Gastrocnemius medialis (tissue), 4 donors: ENCODE measurements at regions of chr1 and their contacts with region 1.

Region 1: DNA sequence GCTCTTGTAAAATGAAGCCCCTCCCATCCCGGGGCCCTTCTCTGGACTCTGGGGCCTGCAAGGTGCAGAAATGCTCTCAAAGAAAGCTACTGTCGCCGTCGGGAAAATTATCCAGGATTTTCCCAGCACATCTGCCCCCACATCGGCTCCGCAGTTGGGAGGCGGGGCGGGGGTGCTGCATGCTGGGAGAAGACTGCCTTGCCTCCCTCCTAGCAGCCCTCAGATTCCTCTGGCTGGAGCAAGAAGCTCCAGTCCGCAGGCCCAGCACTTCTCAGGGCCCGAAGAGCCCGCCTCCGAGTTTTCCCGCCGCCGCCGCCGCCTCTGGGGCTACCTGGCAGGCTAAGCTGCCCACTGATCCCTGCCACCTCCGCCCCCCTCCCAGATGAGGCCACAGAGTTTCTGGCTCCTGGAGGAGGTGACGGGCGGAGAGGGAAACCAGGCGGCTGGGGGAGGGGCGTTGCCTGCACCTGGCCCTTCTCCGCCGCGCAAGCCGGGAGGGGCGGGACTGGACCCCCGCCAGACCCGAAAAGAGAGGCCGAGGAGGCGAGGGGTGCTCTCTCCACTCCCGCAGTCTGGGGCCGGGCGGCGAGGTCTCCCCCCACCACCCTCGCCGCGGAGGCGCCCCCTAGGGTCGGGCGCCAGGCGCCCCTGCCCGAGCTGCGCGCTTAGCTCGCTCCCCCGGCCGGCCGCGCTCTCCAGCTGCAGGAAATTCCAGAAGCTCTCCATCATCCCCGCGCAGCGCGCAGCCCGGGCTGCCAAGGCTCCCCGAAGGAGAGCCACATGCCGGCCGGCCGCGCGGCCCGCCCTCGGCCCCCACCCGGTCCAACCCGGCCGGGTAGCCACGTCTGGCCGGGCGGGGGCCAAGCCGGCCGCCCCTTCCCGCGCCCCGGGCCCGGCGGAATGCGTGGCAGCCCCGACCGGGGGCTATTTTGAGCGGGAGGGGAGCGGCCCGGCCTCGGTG is 28.8 kb downstream of the AHDC1 start:
- DNase-seq: peak in 1 of 2 donors; percentile 87
- ATAC-seq: peak; percentile 41 to 47
- H3K4me3 ChIP-seq: peak overlapping the region; percentile 52 to 66 (median 58)
- H3K27ac ChIP-seq: peak overlapping the region; percentile 95 to 100 (median 98)
- H3K4me1 ChIP-seq: peaks cover 82 to 85% of the 10 kb centered on the region in 2 donors
- H3K27me3 ChIP-seq: no peaks in the 10 kb centered on the region
- CTCF ChIP-seq: peak in 2 of 5 experiments; percentile 30 to 51
- POLR2A ChIP-seq: peak; percentile 27 to 57

Region 2: DNA sequence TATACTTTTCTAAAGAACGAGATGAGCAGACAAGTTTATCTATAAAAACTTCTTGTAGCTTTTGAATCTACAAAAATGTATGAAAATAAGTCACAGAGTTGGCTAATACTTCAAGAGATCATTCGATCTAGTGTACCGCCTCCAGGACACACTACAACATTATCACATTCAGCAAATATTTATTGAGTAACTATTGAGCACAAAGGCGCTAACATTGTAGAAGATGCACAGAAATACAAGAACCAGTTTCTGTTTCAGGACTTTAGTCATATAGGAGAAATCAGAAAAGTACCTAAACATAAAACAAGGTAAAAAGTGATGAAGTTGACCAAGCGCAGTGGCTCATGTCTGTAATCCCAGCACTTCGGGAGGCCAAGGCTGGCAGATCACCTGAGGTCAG is 105.8 kb before region 1 on chr1:
- in situ Hi-C with region 1: no loop called
- intact Hi-C with region 1: no loop called
- DNase-seq: no peak
- ATAC-seq: no peak
- H3K4me3 ChIP-seq: no peak overlapping the region
- H3K27ac ChIP-seq: no peak overlapping the region
- H3K4me1 ChIP-seq: peaks cover 17 to 60% of the 10 kb centered on the region in 2 donors
- H3K27me3 ChIP-seq: no peaks in the 10 kb centered on the region
- CTCF ChIP-seq: no peak
- POLR2A ChIP-seq: no peak

Region 3: DNA sequence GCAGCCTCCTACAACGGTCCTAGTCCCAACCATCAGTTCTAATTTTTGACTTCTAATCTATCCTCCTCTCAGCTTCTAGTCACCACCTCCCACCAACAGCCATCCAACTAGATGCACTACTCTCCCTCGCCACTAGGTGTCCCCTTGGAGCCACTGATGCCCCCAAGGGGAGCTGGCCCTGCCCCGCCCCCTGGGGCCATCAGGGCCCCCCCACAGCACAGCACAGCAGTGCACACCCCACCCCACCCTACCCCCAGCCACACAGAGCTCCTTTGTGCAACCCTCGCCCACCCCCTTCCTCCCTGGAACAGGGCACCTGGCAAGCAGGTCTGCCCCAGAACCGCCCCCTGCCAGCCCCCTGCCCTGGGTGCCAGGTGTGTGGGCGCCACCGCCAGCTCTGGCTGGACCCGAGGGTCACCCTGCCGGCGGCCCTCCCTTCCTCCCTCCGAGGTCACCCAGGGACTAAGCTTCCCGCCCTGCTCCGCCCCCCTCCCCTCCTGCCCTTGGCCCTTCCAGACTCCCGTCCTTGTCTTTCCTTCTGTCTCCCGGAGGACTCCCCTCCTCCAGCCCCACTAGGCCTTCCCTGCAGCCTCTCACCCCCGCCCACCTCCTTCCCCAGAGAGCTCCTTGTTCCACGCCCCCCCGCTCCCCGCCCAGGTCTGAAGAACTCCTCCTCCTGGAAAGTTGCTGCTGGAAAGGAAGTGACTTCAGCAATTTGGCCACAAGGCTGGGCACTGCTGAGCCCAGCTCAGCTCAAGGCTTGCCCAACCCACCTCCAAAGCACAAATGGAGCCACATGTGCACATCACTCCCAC is 18.2 kb before region 1 on chr1:
- in situ Hi-C with region 1: no loop called
- intact Hi-C with region 1: loop called (anchors 2 kb)
- DNase-seq: peak; percentile 88 to 95
- ATAC-seq: peak; percentile 81 to 82
- H3K4me3 ChIP-seq: peak overlapping the region; percentile 10 to 38 (median 29)
- H3K27ac ChIP-seq: peak overlapping the region; percentile 95 to 100 (median 98)
- H3K4me1 ChIP-seq: peaks cover 41 to 61% of the 10 kb centered on the region in 2 donors
- H3K27me3 ChIP-seq: no peaks in the 10 kb centered on the region
- CTCF ChIP-seq: peak; percentile 80 to 97 (median 96)
- POLR2A ChIP-seq: peak in 1 of 2 donors; percentile 13